OCI-LY7 (cell line): ENCODE measurements at regions of chr7 and their contacts with region 1.

Region 1: GRCh38 chr7:69696054-69696591 is 97.8 kb downstream of the AUTS2 start:
- DNase-seq: peak; percentile 95
- H3K4me3 ChIP-seq: peak overlapping the region; percentile 58
- H3K27ac ChIP-seq: peak overlapping the region; percentile 98
- H3K4me1 ChIP-seq: peaks cover 96% of the 10 kb centered on the region
- CTCF ChIP-seq: no peak

Region 2: GRCh38 chr7:69498671-69499070 is 197.5 kb before region 1 on chr7:
- CTCF ChIA-PET with region 1: no interaction called
- POLR2A ChIA-PET with region 1: interaction called, 6 read pairs
- intact Hi-C with region 1: loop called (anchors 5 kb)
- DNase-seq: no peak
- H3K4me3 ChIP-seq: no peak overlapping the region
- H3K27ac ChIP-seq: no peak overlapping the region
- H3K4me1 ChIP-seq: peaks cover 41% of the 10 kb centered on the region
- CTCF ChIP-seq: no peak

Region 3: GRCh38 chr7:69739931-69740431 is 43.9 kb after region 1 on chr7:
- CTCF ChIA-PET with region 1: interaction called, 3 read pairs
- POLR2A ChIA-PET with region 1: interaction called, 5 read pairs
- intact Hi-C with region 1: loop called (anchors 2 kb)
- DNase-seq: peak; percentile 35
- H3K4me3 ChIP-seq: no peak overlapping the region
- H3K27ac ChIP-seq: peak overlapping the region; percentile 20
- H3K4me1 ChIP-seq: peaks cover 48% of the 10 kb centered on the region
- CTCF ChIP-seq: no peak

Region 4: GRCh38 chr7:69768986-69769571 is 73.0 kb after region 1 on chr7:
- CTCF ChIA-PET with region 1: no interaction called
- POLR2A ChIA-PET with region 1: interaction called, 3 read pairs
- intact Hi-C with region 1: loop called (anchors 2 kb)
- DNase-seq: no peak
- H3K4me3 ChIP-seq: no peak overlapping the region
- H3K27ac ChIP-seq: peak overlapping the region; percentile 73
- H3K4me1 ChIP-seq: peaks cover 55% of the 10 kb centered on the region
- CTCF ChIP-seq: no peak

Region 5: DNA sequence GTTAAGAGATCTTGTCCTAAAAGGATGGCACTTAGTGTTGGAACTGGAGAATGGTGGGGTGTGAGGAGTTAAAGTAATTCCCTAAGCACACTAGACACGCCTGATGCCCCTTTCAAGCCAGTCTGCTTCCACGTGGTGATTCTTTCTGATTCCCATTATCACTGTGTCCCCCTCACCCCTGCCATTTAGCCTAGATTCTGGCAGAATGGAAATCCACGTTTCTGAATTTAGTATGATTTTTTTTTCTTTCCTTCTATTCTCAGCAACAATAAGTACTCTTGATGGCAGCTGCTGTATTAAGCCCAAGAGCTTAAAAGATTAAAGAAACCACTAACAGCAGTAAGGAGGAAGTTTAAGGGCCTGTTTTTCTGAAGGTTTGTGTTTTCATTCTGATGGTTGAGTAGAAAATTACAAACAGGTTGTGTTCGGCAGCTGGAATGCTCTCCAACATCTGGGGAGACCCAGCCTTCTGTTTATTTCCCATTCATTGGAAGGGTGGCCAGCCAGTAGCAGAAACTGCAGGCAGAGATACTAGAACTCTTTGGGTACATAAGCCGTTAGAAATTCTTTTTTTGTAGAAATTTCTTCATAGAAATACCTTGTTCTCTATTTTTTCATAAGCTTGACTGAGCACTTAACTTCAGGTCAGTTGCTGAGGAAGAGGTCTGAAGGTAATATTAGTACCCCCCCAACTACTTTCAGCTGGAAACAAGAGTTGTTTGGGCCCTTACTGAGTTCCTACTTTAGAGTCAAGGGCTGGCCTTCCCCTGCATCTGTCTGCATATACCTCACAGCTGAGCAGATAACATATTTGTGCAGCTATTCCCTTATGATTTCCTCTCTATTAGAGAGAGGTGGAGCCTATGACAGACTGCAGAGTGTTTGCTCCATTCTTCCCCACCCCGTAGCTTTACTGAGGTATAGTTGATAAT is 257.3 kb after region 1 on chr7:
- CTCF ChIA-PET with region 1: no interaction called
- POLR2A ChIA-PET with region 1: no interaction called
- intact Hi-C with region 1: loop called (anchors 2 kb)
- DNase-seq: peak; percentile 86
- H3K4me3 ChIP-seq: peak overlapping the region; percentile 42
- H3K27ac ChIP-seq: peak overlapping the region; percentile 96
- H3K4me1 ChIP-seq: peaks cover 70% of the 10 kb centered on the region
- CTCF ChIP-seq: no peak

Region 6: DNA sequence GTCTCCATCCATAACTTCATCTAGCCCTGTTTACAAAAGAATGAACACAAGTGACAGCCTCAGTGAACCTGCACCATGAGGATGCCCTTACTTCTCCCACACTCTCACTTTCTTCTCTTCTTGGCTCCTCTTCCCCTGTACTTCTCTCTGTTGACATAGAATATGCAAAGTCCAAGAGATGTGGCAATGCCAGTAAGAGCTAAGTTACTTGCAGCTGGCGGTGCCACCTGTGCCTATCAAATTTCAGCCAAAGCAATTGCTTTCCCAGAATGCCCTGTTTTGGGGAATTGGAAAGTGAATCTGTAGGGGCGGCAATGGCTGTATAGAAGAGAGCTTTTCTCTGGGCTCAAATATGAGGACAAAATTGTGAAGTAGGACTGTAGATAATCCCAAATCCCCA is 459.9 kb after region 1 on chr7:
- CTCF ChIA-PET with region 1: no interaction called
- POLR2A ChIA-PET with region 1: no interaction called
- intact Hi-C with region 1: loop called (anchors 5 kb)
- DNase-seq: no peak
- H3K4me3 ChIP-seq: no peak overlapping the region
- H3K27ac ChIP-seq: no peak overlapping the region
- H3K4me1 ChIP-seq: no peaks in the 10 kb centered on the region
- CTCF ChIP-seq: no peak